Mammary epithelial cell (primary cell): ENCODE measurements at regions of chr9 and their contacts with region 1.

Region 1: DNA sequence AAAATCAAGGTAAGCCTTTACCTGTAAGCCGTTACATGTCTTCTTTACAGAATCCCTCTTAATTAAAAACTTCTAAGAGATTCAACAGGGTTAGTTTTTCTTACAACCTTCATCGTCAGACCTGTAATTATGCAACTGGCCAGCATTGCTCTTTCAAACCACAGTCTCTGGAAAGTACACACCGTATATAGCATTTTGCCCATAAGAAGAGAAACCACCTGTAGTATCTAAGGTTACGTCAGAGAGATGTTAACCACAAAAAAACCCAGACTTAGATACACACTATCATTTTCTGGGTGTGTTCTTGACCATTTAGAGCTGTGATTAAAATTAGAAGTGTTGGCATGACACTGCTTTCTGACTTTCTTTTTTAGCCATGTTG is 140.0 kb downstream of the MUSK start:
- DNase-seq: no peak
- H3K4me3 ChIP-seq: no peak overlapping the region
- H3K27ac ChIP-seq: no peak overlapping the region
- H3K4me1 ChIP-seq: no peaks in the 10 kb centered on the region
- H3K27me3 ChIP-seq: no peaks in the 10 kb centered on the region
- CTCF ChIP-seq: no peak

Region 2: GRCh38 chr9:110690962-110691549 is 117.5 kb before region 1 on chr9:
- CTCF ChIA-PET with region 1: no interaction called
- dilution Hi-C with region 1: loop called (anchors 25 kb)
- in situ Hi-C with region 1: no loop called
- intact Hi-C with region 1: no loop called
- DNase-seq: no peak
- H3K4me3 ChIP-seq: no peak overlapping the region
- H3K27ac ChIP-seq: no peak overlapping the region
- H3K4me1 ChIP-seq: no peaks in the 10 kb centered on the region
- H3K27me3 ChIP-seq: no peaks in the 10 kb centered on the region
- CTCF ChIP-seq: no peak

Region 3: DNA sequence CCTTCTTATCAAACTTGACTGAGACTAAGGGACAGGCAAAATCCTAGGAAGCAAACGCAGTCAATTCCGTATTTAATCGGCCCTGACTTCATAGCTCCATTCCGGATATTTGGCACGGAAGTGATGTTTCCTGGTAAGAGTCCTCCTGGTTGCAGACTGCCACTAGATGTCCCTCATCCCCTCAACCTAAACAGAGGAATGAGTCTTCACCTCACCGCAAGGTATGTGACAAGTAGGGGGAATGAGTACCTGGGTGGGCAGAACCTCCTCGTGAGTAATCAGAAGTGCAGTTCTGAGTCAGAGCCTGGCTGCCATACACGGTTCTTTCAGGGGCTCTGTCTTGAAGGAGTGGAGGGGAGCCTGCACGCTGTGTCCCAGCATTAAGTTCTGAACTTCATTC is 33.6 kb after region 1 on chr9:
- CTCF ChIA-PET with region 1: no interaction called
- dilution Hi-C with region 1: no loop called
- in situ Hi-C with region 1: no loop called
- intact Hi-C with region 1: no loop called
- DNase-seq: no peak
- H3K4me3 ChIP-seq: no peak overlapping the region
- H3K27ac ChIP-seq: no peak overlapping the region
- H3K4me1 ChIP-seq: peaks cover 6% of the 10 kb centered on the region
- H3K27me3 ChIP-seq: no peaks in the 10 kb centered on the region
- CTCF ChIP-seq: no peak

Region 4: GRCh38 chr9:110864021-110864420 is 55.4 kb after region 1 on chr9:
- CTCF ChIA-PET with region 1: no interaction called
- dilution Hi-C with region 1: no loop called
- in situ Hi-C with region 1: no loop called
- intact Hi-C with region 1: no loop called
- DNase-seq: no peak
- H3K4me3 ChIP-seq: no peak overlapping the region
- H3K27ac ChIP-seq: no peak overlapping the region
- H3K4me1 ChIP-seq: no peaks in the 10 kb centered on the region
- H3K27me3 ChIP-seq: no peaks in the 10 kb centered on the region
- CTCF ChIP-seq: no peak

Region 5: GRCh38 chr9:110874963-110875674 is 66.5 kb after region 1 on chr9:
- CTCF ChIA-PET with region 1: no interaction called
- dilution Hi-C with region 1: no loop called
- in situ Hi-C with region 1: no loop called
- intact Hi-C with region 1: no loop called
- DNase-seq: no peak
- H3K4me3 ChIP-seq: no peak overlapping the region
- H3K27ac ChIP-seq: no peak overlapping the region
- H3K4me1 ChIP-seq: no peaks in the 10 kb centered on the region
- H3K27me3 ChIP-seq: no peaks in the 10 kb centered on the region
- CTCF ChIP-seq: no peak